Adrenal gland (tissue), 19 donors: ENCODE measurements at regions of chr1 and their contacts with region 1.

Region 1: DNA sequence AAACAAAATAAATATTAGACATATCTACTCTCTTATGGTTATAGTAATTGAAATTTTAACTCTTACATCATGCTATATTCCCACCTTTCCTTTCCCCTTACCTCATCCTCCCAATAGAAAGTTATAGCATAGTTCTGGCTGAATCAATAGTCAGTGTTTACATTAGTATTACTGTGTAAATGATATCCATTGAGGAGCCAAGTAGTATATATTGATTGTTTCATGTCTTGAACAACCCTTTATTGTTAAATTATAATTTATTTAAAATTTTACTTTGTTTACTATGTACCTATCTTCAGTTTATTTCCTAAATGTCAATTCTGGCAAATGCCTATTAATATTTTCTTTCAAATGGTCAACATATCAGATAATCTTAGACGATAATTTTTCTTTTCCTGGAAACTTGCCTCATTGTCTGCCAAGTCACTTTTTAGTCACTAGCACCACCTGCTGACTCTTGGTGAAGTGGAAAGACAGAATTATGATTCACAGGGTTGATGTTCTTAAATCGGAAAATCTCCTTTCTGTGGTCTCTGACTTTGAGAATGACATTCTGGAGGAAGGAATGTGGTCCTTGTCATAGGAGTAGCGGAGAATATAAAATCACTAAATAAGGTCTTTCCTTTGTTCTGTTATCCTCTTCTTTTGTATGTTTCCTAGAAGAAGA is 8.7 kb downstream of the HJV start:
- DNase-seq: peak in 6 of 7 donors; percentile 59 to 77 (median 68)
- H3K4me3 ChIP-seq: no peak overlapping the region
- H3K27ac ChIP-seq: no peak overlapping the region
- H3K4me1 ChIP-seq: peaks cover 0 to 13% of the 10 kb centered on the region in 2 donors
- H3K27me3 ChIP-seq: no peaks in the 10 kb centered on the region
- CTCF ChIP-seq: peak; percentile 34 to 87 (median 74)
- POLR2A ChIP-seq: no peak

Region 2: DNA sequence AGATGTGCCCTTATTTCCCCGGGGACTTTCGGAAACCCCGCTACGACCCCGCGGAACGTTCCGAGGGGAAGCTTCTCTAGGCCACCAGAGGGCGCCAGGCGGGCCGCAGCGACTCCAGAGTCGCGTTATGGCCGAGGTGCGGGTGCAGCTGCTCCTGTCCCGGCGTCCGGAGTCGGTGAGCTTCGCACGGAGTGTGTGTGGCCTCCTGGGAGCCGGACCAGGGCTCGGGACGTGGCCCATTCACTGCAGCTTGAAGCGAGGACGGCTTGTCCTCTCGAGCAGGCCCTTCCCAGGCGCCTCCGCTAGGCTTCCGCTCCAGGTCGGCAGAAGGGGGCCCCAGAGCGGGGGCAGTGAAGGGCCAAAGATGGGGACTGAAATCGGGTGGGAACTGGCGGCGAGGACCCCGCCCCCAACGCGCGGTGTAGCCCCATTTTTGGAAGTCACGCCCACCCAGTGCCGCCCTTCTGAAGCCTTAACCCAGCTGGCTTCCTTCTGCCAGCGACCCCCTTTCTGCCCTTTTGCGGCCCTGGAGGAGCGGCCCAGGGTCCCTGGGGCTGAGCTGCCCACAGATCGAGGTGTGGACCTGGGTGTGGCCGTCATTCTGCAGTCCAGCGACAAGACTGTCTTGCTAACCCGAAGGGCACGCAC is 167.2 kb before region 1 on chr1 and contains the start of gene NUDT17:
- intact Hi-C with region 1: loop called (anchors 5 kb)
- DNase-seq: peak; percentile 78 to 89 (median 83)
- H3K4me3 ChIP-seq: peak within 1 kb of the TSS in 2 of 4 donors; percentile 44 to 49
- H3K27ac ChIP-seq: peak within 1 kb of the TSS in 3 of 5 donors; percentile 37 to 67 (median 63)
- H3K4me1 ChIP-seq: peaks cover 9 to 15% of the 10 kb centered on the region in 2 donors
- H3K27me3 ChIP-seq: no peaks in the 10 kb centered on the region
- CTCF ChIP-seq: peak; percentile 80 to 94 (median 89)
- POLR2A ChIP-seq: peak in 1 of 2 donors; percentile 27
- total RNA-seq, gene NUDT17: 1.5 to 6.5 (median 3.4) TPM

Region 3: DNA sequence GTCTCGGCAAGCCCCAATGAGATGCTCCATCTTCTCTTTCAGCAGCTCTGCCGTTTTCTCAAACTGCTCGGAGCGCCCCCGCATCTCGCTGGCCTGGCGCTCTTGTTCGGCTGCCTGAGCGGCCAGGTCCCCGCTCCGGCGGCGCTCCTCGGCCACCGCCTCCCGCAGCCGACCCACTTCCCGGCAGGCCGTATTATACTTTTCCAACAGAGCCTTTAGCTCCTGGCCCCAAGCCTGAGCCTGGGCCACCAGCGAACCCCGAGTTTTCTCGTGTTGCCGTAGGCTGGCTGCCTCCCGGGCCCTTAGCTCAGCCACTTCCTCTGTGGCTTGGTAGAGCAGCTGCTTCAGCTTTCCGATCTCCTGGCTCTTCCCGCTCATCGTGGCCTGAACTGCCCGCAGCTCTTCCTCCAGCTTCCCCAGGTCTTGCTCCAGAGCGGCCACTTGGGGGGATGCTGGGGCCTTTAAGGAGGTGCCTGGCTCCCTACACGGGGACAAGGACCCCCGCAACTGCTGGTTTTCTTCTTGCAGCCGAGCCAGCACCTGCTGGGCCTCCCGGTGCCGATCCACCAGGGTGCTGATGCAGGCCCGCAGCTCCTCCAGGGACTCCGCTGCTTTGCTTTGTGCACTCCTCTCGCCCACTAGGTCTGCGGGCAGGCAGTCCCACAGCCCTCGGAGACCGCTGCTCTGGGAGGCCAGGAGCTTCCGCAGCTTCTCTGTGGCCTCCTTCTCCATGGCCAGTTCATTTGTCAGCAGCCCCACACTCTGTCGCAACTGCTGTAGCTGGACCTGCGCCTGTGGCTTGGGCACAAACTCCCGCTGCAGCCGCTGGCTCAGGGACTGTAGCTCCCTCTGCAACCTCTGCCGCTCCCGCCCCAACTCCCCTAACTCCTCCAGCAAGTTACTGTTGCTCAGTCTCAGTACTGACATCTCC is 140.6 kb before region 1 on chr1:
- intact Hi-C with region 1: no loop called
- DNase-seq: peak in 2 of 7 donors; percentile 26 to 43
- H3K4me3 ChIP-seq: peak overlapping the region in 2 of 4 donors; percentile 25 to 47
- H3K27ac ChIP-seq: peak overlapping the region in 3 of 5 donors; percentile 47 to 67 (median 55)
- H3K4me1 ChIP-seq: peaks cover 0 to 6% of the 10 kb centered on the region in 2 donors
- H3K27me3 ChIP-seq: no peaks in the 10 kb centered on the region
- CTCF ChIP-seq: no peak
- POLR2A ChIP-seq: no peak

Region 4: DNA sequence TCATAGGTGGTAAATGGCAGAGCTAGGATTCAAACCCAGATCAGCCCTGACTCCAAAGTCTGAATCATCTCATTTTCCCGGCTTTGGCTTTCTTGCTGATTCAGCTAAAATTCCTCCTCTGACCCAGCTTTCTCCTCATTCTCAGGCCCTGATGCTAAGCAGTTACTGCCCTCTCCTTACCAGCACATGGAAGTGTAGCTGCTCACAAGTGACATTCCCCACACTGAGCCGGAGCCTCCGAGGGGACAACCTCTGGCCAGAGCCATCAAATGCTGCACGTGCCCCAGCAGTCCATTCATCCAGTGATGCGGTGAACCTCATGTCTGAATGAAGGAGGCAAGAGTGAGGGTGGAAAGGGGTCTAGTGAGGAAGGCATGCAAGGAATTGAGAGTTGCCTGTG is 114.1 kb before region 1 on chr1:
- intact Hi-C with region 1: loop called in 1 of 2 experiments (anchors 5 kb)
- DNase-seq: no peak
- H3K4me3 ChIP-seq: no peak overlapping the region
- H3K27ac ChIP-seq: no peak overlapping the region
- H3K4me1 ChIP-seq: no peaks in the 10 kb centered on the region
- H3K27me3 ChIP-seq: no peaks in the 10 kb centered on the region
- CTCF ChIP-seq: no peak
- POLR2A ChIP-seq: no peak

Region 5: GRCh38 chr1:145972580-145972979 is 40.3 kb before region 1 on chr1:
- intact Hi-C with region 1: loop called (anchors 5 kb)
- DNase-seq: no peak
- H3K4me3 ChIP-seq: no peak overlapping the region
- H3K27ac ChIP-seq: no peak overlapping the region
- H3K4me1 ChIP-seq: peaks cover under 1% of the 10 kb centered on the region in 2 donors
- H3K27me3 ChIP-seq: no peaks in the 10 kb centered on the region
- CTCF ChIP-seq: no peak
- POLR2A ChIP-seq: no peak

Region 6: GRCh38 chr1:145978854-145979759 is 33.8 kb before region 1 on chr1:
- intact Hi-C with region 1: loop called (anchors 5 kb)
- DNase-seq: peak; percentile 91 to 99 (median 97)
- H3K4me3 ChIP-seq: peak overlapping the region in 2 of 4 donors; percentile 5 to 37
- H3K27ac ChIP-seq: peak overlapping the region; percentile 91 to 96 (median 94)
- H3K4me1 ChIP-seq: peaks cover 44 to 64% of the 10 kb centered on the region in 2 donors
- H3K27me3 ChIP-seq: no peaks in the 10 kb centered on the region
- CTCF ChIP-seq: peak in 2 of 6 experiments; percentile 19 to 33
- POLR2A ChIP-seq: peak; percentile 15 to 86